ENCODE measurements at regions of chr12 and their contacts with region 1.

Region 1: DNA sequence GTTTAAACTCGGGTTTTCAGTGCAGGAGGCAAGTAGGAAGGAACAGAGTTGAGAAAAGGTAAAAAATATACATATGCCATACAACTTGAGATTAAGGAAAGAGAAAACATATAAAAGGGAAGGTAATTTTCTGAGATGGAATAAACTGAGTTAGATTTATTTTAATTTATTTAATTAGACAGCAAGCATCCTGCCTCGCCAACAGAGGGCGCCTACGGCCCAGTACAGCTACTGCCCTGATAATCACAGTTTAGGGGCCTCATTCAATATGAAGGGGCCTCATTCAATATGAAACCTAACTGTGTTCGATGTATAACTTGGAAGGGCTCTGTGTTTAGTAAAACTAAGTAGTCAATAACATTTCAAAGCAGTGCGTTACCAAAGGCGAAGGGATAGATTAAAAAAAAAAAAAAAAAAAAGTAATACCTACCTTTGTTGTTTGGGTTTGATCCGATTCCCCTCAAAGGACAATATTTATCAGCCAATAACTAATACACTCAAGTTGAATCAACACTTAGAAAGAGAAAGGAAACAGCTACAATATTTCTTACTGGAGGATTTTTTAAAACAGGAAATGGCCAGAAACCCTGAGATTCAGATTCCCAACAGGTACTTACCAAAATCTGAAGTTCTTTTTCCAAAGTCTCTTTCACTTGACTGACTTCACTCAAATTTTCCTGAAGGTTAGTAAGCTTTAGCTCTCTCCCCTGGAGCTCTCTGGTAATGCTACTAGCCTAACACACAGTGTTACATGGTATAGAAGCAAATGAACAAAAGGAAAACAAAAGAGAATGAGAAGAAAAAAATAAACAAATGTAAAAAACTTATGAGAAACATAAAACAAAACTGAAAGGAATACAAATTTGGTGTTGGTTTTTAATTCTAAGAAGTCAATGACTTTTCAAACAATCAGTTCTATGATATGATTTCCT is 70.0 kb upstream of the VPS33A start:
- DNase-seq: no peak
- H3K4me3 ChIP-seq: no peak overlapping the region
- H3K27ac ChIP-seq: no peak overlapping the region
- H3K27me3 ChIP-seq: no peaks in the 10 kb centered on the region
- CTCF ChIP-seq: peak; percentile 72

Region 2: GRCh38 chr12:122350141-122350848 is 14.0 kb after region 1 on chr12:
- CTCF ChIA-PET with region 1: interaction called, 37 read pairs
- POLR2A ChIA-PET with region 1: no interaction called
- DNase-seq: peak; percentile 18
- H3K4me3 ChIP-seq: no peak overlapping the region
- H3K27ac ChIP-seq: no peak overlapping the region
- H3K27me3 ChIP-seq: no peaks in the 10 kb centered on the region
- CTCF ChIP-seq: peak; percentile 39

Measured in AG04450 (cell line).